ENCODE measurements at regions of chr1 and their contacts with region 1.

Region 1: DNA sequence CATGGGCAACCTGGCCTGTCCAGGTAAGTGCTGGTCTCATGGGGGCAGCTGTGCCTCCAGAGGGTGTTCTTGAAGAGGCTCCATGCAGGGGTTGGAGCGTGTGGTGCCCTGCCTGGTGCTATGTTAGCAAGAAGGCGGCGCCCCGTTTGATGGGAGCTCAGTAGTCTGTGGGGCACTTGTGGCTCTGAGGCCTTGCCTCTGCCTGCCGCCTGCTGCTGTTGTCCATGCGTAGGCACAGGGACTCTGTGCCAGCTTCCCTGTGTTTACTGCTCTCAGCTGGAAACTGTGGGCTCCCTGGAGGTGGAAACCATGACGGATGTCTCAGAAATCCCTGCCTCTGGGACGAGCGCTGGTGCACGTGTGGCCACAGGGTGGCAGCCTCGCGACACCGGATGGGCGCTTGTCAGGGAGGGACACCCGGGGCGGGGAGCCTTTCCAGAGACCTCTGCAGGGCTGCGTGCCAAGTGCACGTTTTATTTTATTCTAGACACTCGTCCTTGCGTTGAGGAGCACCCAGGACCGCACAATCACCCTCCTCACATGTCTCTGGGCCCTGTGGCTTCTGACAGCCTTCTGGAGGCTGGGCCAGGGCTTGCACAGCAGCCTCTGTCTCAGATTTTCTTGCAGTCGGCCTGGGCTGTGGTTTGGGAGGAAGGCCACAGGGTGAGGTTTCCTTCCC is 27.1 kb downstream of the SNAP47 start:
- DNase-seq: peak; percentile 87 to 96 (median 95)
- ATAC-seq: peak; percentile 80 to 87
- H3K4me3 ChIP-seq: no peak overlapping the region
- H3K27ac ChIP-seq: no peak overlapping the region
- H3K4me1 ChIP-seq: no peaks in the 10 kb centered on the region
- H3K27me3 ChIP-seq: no peaks in the 10 kb centered on the region

Region 2: DNA sequence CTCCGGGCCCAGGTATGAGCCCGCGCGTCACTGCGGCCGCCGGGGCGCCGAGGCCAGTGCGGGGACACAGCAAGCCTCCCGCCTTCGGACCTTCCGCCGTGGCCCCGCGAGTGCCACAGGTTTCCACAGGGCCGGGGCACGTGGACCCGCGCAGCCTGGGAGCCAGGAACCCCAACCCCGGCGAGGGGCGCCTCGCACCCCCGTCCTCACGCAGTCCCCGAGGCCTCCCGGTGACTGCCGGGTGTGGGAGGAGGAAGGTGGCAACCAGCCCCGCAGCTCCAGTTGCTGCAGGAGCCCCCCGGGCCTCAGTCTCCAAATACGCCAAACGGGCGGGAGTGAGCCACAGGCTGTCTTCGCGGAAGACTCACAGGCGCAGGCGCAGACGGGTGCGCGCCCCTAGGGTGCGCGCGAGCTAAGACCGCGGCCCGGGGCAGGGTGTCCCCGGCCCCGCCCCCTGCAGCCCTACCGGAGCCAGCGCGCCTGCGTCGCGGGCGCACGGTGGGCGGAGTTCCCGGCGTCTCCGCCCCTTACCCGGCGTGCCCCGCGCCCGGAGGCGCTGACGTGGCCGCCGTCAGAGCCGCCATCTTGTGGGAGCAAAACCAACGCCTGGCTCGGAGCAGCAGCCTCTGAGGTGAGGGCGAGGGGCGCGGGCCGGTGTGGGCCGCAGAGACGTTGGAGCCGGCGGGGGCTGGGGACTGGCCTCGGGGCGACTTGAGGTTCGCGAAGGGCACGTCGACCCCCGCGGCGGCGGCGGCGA is 319.9 kb after region 1 on chr1 and contains the start of gene ARF1:
- intact Hi-C with region 1: loop called in 1 of 4 experiments (anchors 10 kb)
- DNase-seq: peak; percentile 94 to 98 (median 98)
- ATAC-seq: peak; percentile 92 to 95
- H3K4me3 ChIP-seq: peak within 1 kb of the TSS; percentile 94
- H3K27ac ChIP-seq: peak within 1 kb of the TSS; percentile 100
- H3K4me1 ChIP-seq: peaks cover 18% of the 10 kb centered on the region
- H3K27me3 ChIP-seq: no peaks in the 10 kb centered on the region
- total RNA-seq, gene ARF1: 299 to 395 (median 364) TPM

Measured in right cardiac atrium (tissue), 5 donors.